B cell (primary cell): ENCODE measurements at regions of chr20 and their contacts with region 1.

Region 1: DNA sequence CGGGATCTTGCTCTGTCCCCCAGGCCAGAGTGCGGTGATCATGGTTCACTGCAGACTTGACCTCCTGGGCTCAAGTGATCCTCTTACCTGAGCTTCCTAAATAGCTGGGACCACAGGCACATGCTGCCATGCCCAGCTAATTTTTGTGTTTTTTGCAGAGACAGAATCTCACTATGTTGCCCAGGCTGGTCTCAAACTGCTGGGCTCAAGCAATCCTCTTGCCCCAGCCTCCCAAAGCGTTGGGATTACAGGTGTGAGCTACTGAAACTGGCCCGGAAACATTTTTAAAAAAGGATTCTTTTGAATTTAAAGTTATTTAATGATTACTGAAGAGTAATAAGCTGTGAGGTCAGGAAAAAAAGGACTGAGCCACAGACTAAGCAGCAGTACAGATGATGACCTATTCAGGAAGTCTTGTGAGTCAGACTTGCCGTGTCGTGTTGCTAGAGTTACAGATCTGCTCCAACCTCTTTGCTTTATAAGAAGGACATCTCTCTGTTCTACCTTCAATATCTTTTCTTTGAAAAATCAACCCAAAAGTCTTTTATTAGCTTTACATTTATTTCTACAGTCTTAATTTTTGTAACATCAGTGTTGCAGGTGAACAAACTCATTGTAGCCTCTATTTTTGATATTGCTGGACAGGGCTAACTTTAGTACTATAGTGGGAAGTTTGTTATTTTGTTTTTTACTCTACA is 108.7 kb downstream of the NCOA3 start:
- DNase-seq: peak; percentile 52
- ATAC-seq: peak; percentile 89
- H3K4me3 ChIP-seq: no peak overlapping the region
- H3K4me3 Mint-ChIP-seq: peak overlapping the region; percentile 68
- H3K27ac ChIP-seq: peak overlapping the region; percentile 15 to 73
- H3K27ac Mint-ChIP-seq: peak overlapping the region; percentile 81
- H3K4me1 ChIP-seq: peaks cover 27 to 37% of the 10 kb centered on the region in 2 donors
- H3K4me1 Mint-ChIP-seq: peaks cover 76% of the 10 kb centered on the region
- H3K27me3 ChIP-seq: no peaks in the 10 kb centered on the region
- H3K27me3 Mint-ChIP-seq: no peaks in the 10 kb centered on the region
- CTCF ChIP-seq: no peak

Region 2: GRCh38 chr20:47508278-47508677 is 102.1 kb before region 1 on chr20:
- CTCF ChIA-PET with region 1: no interaction called
- POLR2A ChIA-PET with region 1: no interaction called
- intact Hi-C with region 1: loop called (anchors 5 kb)
- DNase-seq: no peak
- ATAC-seq: no peak
- H3K4me3 ChIP-seq: peak overlapping the region in 1 of 5 experiments; percentile 33
- H3K4me3 Mint-ChIP-seq: peak overlapping the region; percentile 59
- H3K27ac ChIP-seq: peak overlapping the region in 1 of 2 donors; percentile 76
- H3K27ac Mint-ChIP-seq: peak overlapping the region; percentile 63
- H3K4me1 ChIP-seq: peaks cover 72 to 83% of the 10 kb centered on the region in 2 donors
- H3K4me1 Mint-ChIP-seq: peaks cover 70% of the 10 kb centered on the region
- H3K27me3 ChIP-seq: no peaks in the 10 kb centered on the region
- H3K27me3 Mint-ChIP-seq: no peaks in the 10 kb centered on the region
- CTCF ChIP-seq: no peak

Region 3: GRCh38 chr20:47620808-47621805 is 10.7 kb after region 1 on chr20:
- CTCF ChIA-PET with region 1: interaction called, 8 read pairs
- POLR2A ChIA-PET with region 1: no interaction called
- intact Hi-C with region 1: loop called (anchors 1 kb)
- DNase-seq: peak; percentile 68
- ATAC-seq: peak; percentile 31
- H3K4me3 ChIP-seq: no peak overlapping the region
- H3K4me3 Mint-ChIP-seq: no peak overlapping the region
- H3K27ac ChIP-seq: peak overlapping the region in 1 of 2 donors; percentile 72
- H3K27ac Mint-ChIP-seq: peak overlapping the region; percentile 28
- H3K4me1 ChIP-seq: peaks cover 6 to 8% of the 10 kb centered on the region in 2 donors
- H3K4me1 Mint-ChIP-seq: peaks cover 30% of the 10 kb centered on the region
- H3K27me3 ChIP-seq: no peaks in the 10 kb centered on the region
- H3K27me3 Mint-ChIP-seq: no peaks in the 10 kb centered on the region
- CTCF ChIP-seq: peak; percentile 94

Region 4: GRCh38 chr20:47642624-47643023 is 32.2 kb after region 1 on chr20:
- CTCF ChIA-PET with region 1: interaction called, 3 read pairs
- POLR2A ChIA-PET with region 1: interaction called, 12 read pairs
- intact Hi-C with region 1: no loop called
- DNase-seq: no peak
- ATAC-seq: no peak
- H3K4me3 ChIP-seq: no peak overlapping the region
- H3K4me3 Mint-ChIP-seq: no peak overlapping the region
- H3K27ac ChIP-seq: no peak overlapping the region
- H3K27ac Mint-ChIP-seq: no peak overlapping the region
- H3K4me1 ChIP-seq: no peaks in the 10 kb centered on the region
- H3K4me1 Mint-ChIP-seq: peaks cover 3% of the 10 kb centered on the region
- H3K27me3 ChIP-seq: no peaks in the 10 kb centered on the region
- H3K27me3 Mint-ChIP-seq: no peaks in the 10 kb centered on the region
- CTCF ChIP-seq: no peak